CD4-positive, alpha-beta T cell (primary cell): ENCODE measurements at regions of chr17 and their contacts with region 1.

Region 1: DNA sequence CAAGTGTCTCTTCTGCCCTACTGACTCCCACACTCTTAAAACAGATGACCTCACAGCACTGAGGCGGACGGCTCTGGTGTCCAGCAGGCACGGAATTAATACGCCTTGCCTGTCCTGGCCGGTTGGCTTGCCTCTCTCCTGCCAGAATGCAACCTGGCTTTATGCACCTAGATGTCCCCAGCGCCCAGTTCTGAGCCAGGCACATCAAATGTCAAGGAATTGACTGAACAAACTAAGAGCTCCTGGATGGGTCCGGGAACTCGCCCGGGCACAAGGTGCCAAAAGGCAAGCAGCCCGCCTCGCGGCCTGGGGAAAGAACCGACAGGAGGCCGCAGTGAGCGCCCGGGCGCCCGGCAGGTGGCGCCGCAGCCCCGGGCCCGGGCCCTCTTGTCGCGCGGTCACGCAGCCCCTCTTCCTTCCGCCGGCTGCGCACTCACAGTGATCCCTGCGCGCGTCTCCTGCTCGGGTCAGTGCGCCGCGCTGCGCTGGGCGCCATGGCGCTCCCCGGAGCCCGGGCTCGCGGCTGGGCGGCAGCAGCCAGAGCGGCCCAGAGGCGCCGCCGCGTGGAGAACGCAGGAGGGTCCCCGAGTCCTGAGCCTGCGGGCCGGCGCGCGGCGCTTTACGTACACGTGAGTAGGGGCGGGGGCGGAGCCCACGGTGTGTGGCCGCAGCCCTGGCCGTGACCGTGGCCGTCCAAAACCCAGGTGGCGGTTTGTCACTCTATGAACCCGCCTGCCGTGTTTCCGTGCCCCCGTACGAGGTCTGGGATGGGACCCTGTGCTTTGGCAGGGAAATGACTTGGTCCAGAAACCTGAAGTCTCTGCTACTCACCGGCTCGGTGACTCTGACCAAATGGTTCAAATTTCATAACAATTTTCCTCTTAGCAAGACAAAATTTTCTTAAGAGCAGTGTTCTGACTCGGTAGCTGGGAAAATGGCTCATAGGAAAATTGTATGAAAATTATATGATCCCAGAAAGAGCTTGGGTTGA is at the start of gene RSAD1:
- DNase-seq: peak; percentile 74 to 96 (median 84)
- ATAC-seq: peak; percentile 89
- H3K4me3 ChIP-seq: peak within 1 kb of the TSS; percentile 94
- H3K4me3 Mint-ChIP-seq: peak within 1 kb of the TSS; percentile 95
- H3K27ac ChIP-seq: peak within 1 kb of the TSS; percentile 68 to 83
- H3K27ac Mint-ChIP-seq: peak within 1 kb of the TSS; percentile 88
- H3K4me1 ChIP-seq: peaks cover 30% of the 10 kb centered on the region
- H3K4me1 Mint-ChIP-seq: peaks cover 23% of the 10 kb centered on the region
- H3K27me3 ChIP-seq: no peaks in the 10 kb centered on the region
- H3K27me3 Mint-ChIP-seq: no peaks in the 10 kb centered on the region
- CTCF ChIP-seq: peak; percentile 84
- total RNA-seq, gene RSAD1: 44.6 to 44.7 TPM

Region 2: GRCh38 chr17:48492401-48493298 is 1986.0 kb before region 1 on chr17:
- CTCF ChIA-PET with region 1: no interaction called
- POLR2A ChIA-PET with region 1: no interaction called
- intact Hi-C with region 1: no loop called
- DNase-seq: peak; percentile 28 to 85 (median 66)
- ATAC-seq: peak; percentile 97
- H3K4me3 ChIP-seq: peak overlapping the region; percentile 59
- H3K4me3 Mint-ChIP-seq: peak overlapping the region; percentile 9
- H3K27ac ChIP-seq: no peak overlapping the region
- H3K27ac Mint-ChIP-seq: no peak overlapping the region
- H3K4me1 ChIP-seq: peaks cover 21% of the 10 kb centered on the region
- H3K4me1 Mint-ChIP-seq: peaks cover 3% of the 10 kb centered on the region
- H3K27me3 ChIP-seq: peaks cover 7 to 12% of the 10 kb centered on the region in 2 experiments
- H3K27me3 Mint-ChIP-seq: peaks cover 31% of the 10 kb centered on the region
- CTCF ChIP-seq: peak; percentile 86

Region 3: DNA sequence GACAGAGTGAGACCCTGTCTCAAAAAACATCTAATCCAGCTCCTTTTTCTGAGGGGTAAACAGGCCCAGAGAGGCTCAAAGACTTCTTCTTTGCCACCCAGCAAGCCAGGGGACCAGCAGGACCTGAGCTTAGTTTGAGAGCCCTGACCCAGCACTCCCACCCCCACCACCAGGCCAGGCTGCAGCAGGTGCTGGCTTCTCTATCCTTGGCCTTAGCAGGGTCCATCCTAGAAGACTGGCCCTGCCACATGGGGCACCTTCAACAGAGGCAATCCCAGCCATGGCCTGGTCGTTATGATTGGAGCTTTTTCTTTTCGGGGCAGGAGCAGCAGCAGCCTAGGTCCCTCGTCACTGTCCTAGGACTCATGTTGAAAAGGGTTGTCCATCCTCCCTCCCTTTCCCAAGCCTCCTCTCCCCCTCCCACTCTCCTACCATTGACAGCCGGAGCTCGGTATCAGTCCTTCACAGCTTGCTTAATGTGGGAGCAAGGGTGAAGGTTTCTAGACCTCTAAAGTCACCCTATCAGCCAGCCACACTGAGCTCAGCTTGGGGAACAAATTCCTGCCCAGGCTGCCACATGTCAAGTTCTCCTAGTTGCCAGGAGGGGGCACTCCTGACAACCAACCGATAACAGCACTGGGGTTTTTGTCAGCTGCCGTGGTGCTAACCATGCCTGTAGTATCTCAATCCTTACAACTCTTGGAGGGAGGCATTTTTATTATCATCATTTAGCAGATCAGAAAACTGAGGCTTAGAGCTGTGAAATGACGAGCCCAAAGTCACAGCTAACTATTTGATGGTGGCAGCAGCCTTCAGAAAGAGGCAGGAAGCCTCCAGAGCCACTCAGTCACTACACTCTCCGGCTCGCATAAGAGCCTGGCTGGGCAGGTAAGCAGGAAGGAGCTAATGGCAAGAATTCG is 116.9 kb before region 1 on chr17:
- CTCF ChIA-PET with region 1: interaction called, 8 read pairs
- POLR2A ChIA-PET with region 1: interaction called, 4 read pairs
- intact Hi-C with region 1: loop called in 1 of 2 experiments (anchors 2 kb)
- DNase-seq: peak; percentile 39 to 84 (median 49)
- ATAC-seq: peak; percentile 97
- H3K4me3 ChIP-seq: no peak overlapping the region
- H3K4me3 Mint-ChIP-seq: peak overlapping the region; percentile 13
- H3K27ac ChIP-seq: no peak overlapping the region
- H3K27ac Mint-ChIP-seq: peak overlapping the region; percentile 10
- H3K4me1 ChIP-seq: peaks cover 11% of the 10 kb centered on the region
- H3K4me1 Mint-ChIP-seq: peaks cover 9% of the 10 kb centered on the region
- H3K27me3 ChIP-seq: no peaks in the 10 kb centered on the region
- H3K27me3 Mint-ChIP-seq: no peaks in the 10 kb centered on the region
- CTCF ChIP-seq: peak; percentile 79

Region 4: GRCh38 chr17:50397111-50397918 is 81.4 kb before region 1 on chr17 and contains the start of gene LRRC59:
- CTCF ChIA-PET with region 1: interaction called, 19 read pairs
- POLR2A ChIA-PET with region 1: interaction called, 21 read pairs
- intact Hi-C with region 1: loop called in 1 of 2 experiments (anchors 1 kb)
- DNase-seq: peak; percentile 87 to 96 (median 92)
- ATAC-seq: peak; percentile 99
- H3K4me3 ChIP-seq: peak within 1 kb of the TSS; percentile 100
- H3K4me3 Mint-ChIP-seq: peak within 1 kb of the TSS; percentile 99
- H3K27ac ChIP-seq: peak within 1 kb of the TSS; percentile 60 to 87
- H3K27ac Mint-ChIP-seq: peak within 1 kb of the TSS; percentile 83
- H3K4me1 ChIP-seq: peaks cover 30% of the 10 kb centered on the region
- H3K4me1 Mint-ChIP-seq: peaks cover 45% of the 10 kb centered on the region
- H3K27me3 ChIP-seq: no peaks in the 10 kb centered on the region
- H3K27me3 Mint-ChIP-seq: no peaks in the 10 kb centered on the region
- CTCF ChIP-seq: peak; percentile 99
- total RNA-seq, gene LRRC59: 45.1 to 51.5 TPM

Region 5: GRCh38 chr17:50505591-50506130 is 27.0 kb after region 1 on chr17:
- CTCF ChIA-PET with region 1: interaction called, 16 read pairs
- POLR2A ChIA-PET with region 1: no interaction called
- intact Hi-C with region 1: no loop called
- DNase-seq: no peak
- ATAC-seq: no peak
- H3K4me3 ChIP-seq: no peak overlapping the region
- H3K4me3 Mint-ChIP-seq: no peak overlapping the region
- H3K27ac ChIP-seq: no peak overlapping the region
- H3K27ac Mint-ChIP-seq: no peak overlapping the region
- H3K4me1 ChIP-seq: peaks cover 28% of the 10 kb centered on the region
- H3K4me1 Mint-ChIP-seq: peaks cover 20% of the 10 kb centered on the region
- H3K27me3 ChIP-seq: no peaks in the 10 kb centered on the region
- H3K27me3 Mint-ChIP-seq: no peaks in the 10 kb centered on the region
- CTCF ChIP-seq: no peak

Region 6: GRCh38 chr17:50547035-50547735 is 68.5 kb after region 1 on chr17 and contains the start of gene SPATA20:
- CTCF ChIA-PET with region 1: interaction called, 10 read pairs
- POLR2A ChIA-PET with region 1: no interaction called
- intact Hi-C with region 1: loop called in 1 of 2 experiments (anchors 10 kb)
- DNase-seq: peak; percentile 74 to 94 (median 79)
- ATAC-seq: peak; percentile 85
- H3K4me3 ChIP-seq: peak within 1 kb of the TSS; percentile 56
- H3K4me3 Mint-ChIP-seq: peak within 1 kb of the TSS; percentile 71
- H3K27ac ChIP-seq: no peak within 1 kb of the TSS
- H3K27ac Mint-ChIP-seq: no peak within 1 kb of the TSS
- H3K4me1 ChIP-seq: peaks cover 25% of the 10 kb centered on the region
- H3K4me1 Mint-ChIP-seq: peaks cover 21% of the 10 kb centered on the region
- H3K27me3 ChIP-seq: no peaks in the 10 kb centered on the region
- H3K27me3 Mint-ChIP-seq: peaks cover 6% of the 10 kb centered on the region
- CTCF ChIP-seq: peak; percentile 92
- total RNA-seq, gene SPATA20: 10.2 to 10.3 TPM

Region 7: GRCh38 chr17:50697663-50698274 is 219.1 kb after region 1 on chr17:
- CTCF ChIA-PET with region 1: interaction called, 3 read pairs
- POLR2A ChIA-PET with region 1: no interaction called
- intact Hi-C with region 1: loop called in 1 of 2 experiments (anchors 5 kb)
- DNase-seq: peak in 2 of 14 experiments; percentile 19 to 21
- ATAC-seq: no peak
- H3K4me3 ChIP-seq: no peak overlapping the region
- H3K4me3 Mint-ChIP-seq: no peak overlapping the region
- H3K27ac ChIP-seq: no peak overlapping the region
- H3K27ac Mint-ChIP-seq: no peak overlapping the region
- H3K4me1 ChIP-seq: peaks cover 2% of the 10 kb centered on the region
- H3K4me1 Mint-ChIP-seq: peaks cover 26% of the 10 kb centered on the region
- H3K27me3 ChIP-seq: no peaks in the 10 kb centered on the region
- H3K27me3 Mint-ChIP-seq: no peaks in the 10 kb centered on the region
- CTCF ChIP-seq: no peak

Region 8: GRCh38 chr17:50816771-50817751 is 338.4 kb after region 1 on chr17:
- CTCF ChIA-PET with region 1: no interaction called
- POLR2A ChIA-PET with region 1: no interaction called
- intact Hi-C with region 1: no loop called
- DNase-seq: peak; percentile 30 to 77 (median 53)
- ATAC-seq: peak; percentile 66
- H3K4me3 ChIP-seq: no peak overlapping the region
- H3K4me3 Mint-ChIP-seq: no peak overlapping the region
- H3K27ac ChIP-seq: no peak overlapping the region
- H3K27ac Mint-ChIP-seq: no peak overlapping the region
- H3K4me1 ChIP-seq: peaks cover 8% of the 10 kb centered on the region
- H3K4me1 Mint-ChIP-seq: no peaks in the 10 kb centered on the region
- H3K27me3 ChIP-seq: peaks cover 4 to 6% of the 10 kb centered on the region in 2 experiments
- H3K27me3 Mint-ChIP-seq: peaks cover 25% of the 10 kb centered on the region
- CTCF ChIP-seq: peak; percentile 85